ENCODE measurements at regions of chr9 and their contacts with region 1.

Region 1: DNA sequence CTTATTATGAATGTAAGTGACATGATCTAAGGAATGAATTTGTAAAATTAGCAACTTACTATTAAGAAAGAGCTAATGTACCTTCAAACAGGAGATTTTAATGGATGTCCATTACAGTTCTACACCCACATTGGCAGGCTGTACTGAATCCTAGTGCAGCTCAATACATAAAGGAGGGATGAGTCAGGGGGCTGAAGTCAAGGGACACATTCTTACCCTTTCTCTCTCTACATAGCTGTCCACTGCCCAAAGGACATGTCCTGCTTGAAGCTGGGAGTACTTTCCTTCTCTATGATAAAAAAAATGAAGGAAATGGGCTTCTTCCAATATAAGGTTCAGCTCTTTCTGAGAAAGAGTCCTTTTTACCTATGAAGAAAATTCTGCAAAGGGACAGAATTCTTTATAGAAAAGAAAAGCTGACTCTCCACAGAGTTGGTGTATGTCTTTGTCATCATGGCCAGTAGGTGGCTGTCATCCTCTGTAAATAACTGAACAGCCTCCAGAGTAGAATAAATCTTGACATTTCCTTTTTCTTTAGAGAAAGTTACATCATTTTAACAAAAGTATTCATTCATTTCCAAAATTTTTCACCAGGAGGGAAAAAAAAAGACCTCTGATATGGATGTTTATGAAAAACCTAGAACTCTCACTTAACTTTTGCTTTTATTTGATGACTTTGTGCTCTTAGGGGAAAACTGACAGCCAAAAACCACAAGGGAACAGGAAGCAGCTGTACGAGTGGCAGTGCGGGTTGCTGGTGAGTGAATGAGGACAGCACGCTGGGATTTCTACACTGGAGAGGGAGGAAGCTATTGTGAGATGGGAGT is 13.1 kb upstream of the IFNA14 start:
- DNase-seq: no peak
- ATAC-seq: peak; percentile 91
- H3K4me3 ChIP-seq: no peak overlapping the region
- H3K27ac ChIP-seq: no peak overlapping the region
- H3K4me1 ChIP-seq: no peaks in the 10 kb centered on the region
- H3K27me3 ChIP-seq: no peaks in the 10 kb centered on the region; a peak in 3 of 4 replicates
- CTCF ChIP-seq: peak; percentile 60 to 63 (median 62)
- EP300 ChIP-seq: no peak
- POLR2A ChIP-seq: no peak
- RAD21 ChIP-seq: peak; percentile 62

Region 2: GRCh38 chr9:21267485-21268346 is 14.8 kb after region 1 on chr9:
- CTCF ChIA-PET with region 1: interaction called, 16 read pairs
- POLR2A ChIA-PET with region 1: no interaction called
- RAD21 ChIA-PET with region 1: interaction called, 13 read pairs
- SMC1A ChIA-PET with region 1: interaction called, 30 read pairs
- in situ Hi-C with region 1: no loop called
- intact Hi-C with region 1: no loop called
- DNase-seq: no peak
- ATAC-seq: peak; percentile 87
- H3K4me3 ChIP-seq: no peak overlapping the region
- H3K27ac ChIP-seq: no peak overlapping the region
- H3K4me1 ChIP-seq: peaks cover 3% of the 10 kb centered on the region; the same call in 1 of the 2 replicates
- H3K27me3 ChIP-seq: no peaks in the 10 kb centered on the region; a peak in 1 of 4 replicates
- CTCF ChIP-seq: no peak
- EP300 ChIP-seq: no peak
- POLR2A ChIP-seq: no peak
- RAD21 ChIP-seq: no peak

Region 3: GRCh38 chr9:21455320-21455719 is 202.4 kb after region 1 on chr9:
- CTCF ChIA-PET with region 1: interaction called, 11 read pairs
- POLR2A ChIA-PET with region 1: no interaction called
- RAD21 ChIA-PET with region 1: interaction called, 3 read pairs
- SMC1A ChIA-PET with region 1: interaction called, 6 read pairs
- in situ Hi-C with region 1: no loop called
- intact Hi-C with region 1: loop called (anchors 5 kb)
- DNase-seq: no peak
- ATAC-seq: peak; percentile 98
- H3K4me3 ChIP-seq: no peak overlapping the region
- H3K27ac ChIP-seq: no peak overlapping the region
- H3K4me1 ChIP-seq: no peaks in the 10 kb centered on the region
- H3K27me3 ChIP-seq: 0 out of 4 replicates have a peak, but pooled peaks cover 0 to 2% of the 10 kb centered on the region in 2 experiments
- CTCF ChIP-seq: peak; percentile 81 to 87 (median 86)
- EP300 ChIP-seq: no peak
- POLR2A ChIP-seq: no peak
- RAD21 ChIP-seq: peak; percentile 89

Measured in GM12878 (cell line).